Dorsolateral prefrontal cortex (tissue), 120 donors: ENCODE measurements at regions of chr5 and their contacts with region 1.

Region 1: GRCh38 chr5:138874771-138875551 is at the start of gene LRRTM2:
- DNase-seq: peak in 9 of 10 donors; percentile 50 to 86 (median 74)
- H3K4me3 ChIP-seq: peak within 1 kb of the TSS; percentile 41 to 88 (median 66)
- H3K27ac ChIP-seq: peak within 1 kb of the TSS; percentile 27 to 95 (median 89)
- H3K27me3 ChIP-seq: no peaks in the 10 kb centered on the region
- CTCF ChIP-seq: peak in 1 of 56 donors; percentile 8
- total RNA-seq, gene LRRTM2: 19.2 to 91.2 (median 65.0) TPM

Region 2: GRCh38 chr5:138725138-138725833 is 149.7 kb before region 1 on chr5:
- intact Hi-C with region 1: no loop called
- DNase-seq: peak in 8 of 10 donors; percentile 31 to 77 (median 58)
- H3K4me3 ChIP-seq: peak overlapping the region in 3 of 59 donors; percentile 12 to 16 (median 14)
- H3K27ac ChIP-seq: peak overlapping the region; percentile 4 to 94 (median 81)
- H3K27me3 ChIP-seq: no peaks in the 10 kb centered on the region
- CTCF ChIP-seq: peak in 20 of 56 donors; percentile 3 to 32 (median 18)

Region 3: GRCh38 chr5:138809391-138809790 is 65.6 kb before region 1 on chr5:
- intact Hi-C with region 1: no loop called
- DNase-seq: no peak
- H3K4me3 ChIP-seq: no peak overlapping the region
- H3K27ac ChIP-seq: no peak overlapping the region
- H3K27me3 ChIP-seq: no peaks in the 10 kb centered on the region
- CTCF ChIP-seq: no peak

Region 4: DNA sequence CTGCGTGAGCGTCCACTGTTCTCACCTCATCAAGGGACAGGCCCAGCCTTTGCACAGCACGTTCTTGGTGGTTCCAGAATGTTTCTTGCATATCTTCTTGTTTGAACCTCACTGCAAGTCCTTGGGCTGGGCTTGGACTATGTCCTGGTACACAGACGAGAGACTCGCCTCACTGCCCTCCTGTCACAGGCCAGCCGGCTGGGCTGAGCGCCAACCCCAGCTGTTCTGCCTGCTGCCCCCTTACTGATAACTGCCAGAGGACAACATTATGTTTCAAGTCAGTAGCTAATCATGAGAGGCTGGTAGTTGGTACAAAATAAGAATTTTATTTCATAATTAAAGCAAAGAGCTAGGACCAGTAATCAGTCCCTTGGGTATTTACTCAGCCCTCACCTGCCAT is 53.0 kb after region 1 on chr5:
- intact Hi-C with region 1: loop called (anchors 5 kb)
- DNase-seq: peak; percentile 77 to 94 (median 88)
- H3K4me3 ChIP-seq: peak overlapping the region in 6 of 59 donors; percentile 6 to 21 (median 12)
- H3K27ac ChIP-seq: peak overlapping the region; percentile 58 to 98 (median 89)
- H3K27me3 ChIP-seq: no peaks in the 10 kb centered on the region
- CTCF ChIP-seq: peak in 20 of 56 donors; percentile 7 to 43 (median 22)

Region 5: DNA sequence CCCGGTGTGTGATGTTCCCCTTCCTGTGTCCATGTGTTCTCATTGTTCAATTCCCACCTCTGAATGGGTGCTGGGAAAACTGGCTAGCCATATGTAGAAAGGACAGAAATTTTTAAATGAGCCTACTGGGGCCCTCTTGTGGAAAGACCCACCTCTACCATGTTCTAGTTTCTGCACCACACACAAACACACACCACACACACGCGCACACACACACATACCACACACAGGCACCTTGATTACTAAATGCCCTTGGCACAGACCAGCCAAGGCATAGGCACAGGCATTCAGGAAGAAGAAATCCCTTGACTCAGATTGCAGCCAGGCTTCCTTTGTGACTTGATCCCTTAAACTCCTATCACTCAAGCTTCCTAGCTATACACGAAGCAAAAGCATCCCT is 262.7 kb after region 1 on chr5:
- intact Hi-C with region 1: loop called (anchors 5 to 10 kb)
- DNase-seq: peak in 1 of 10 donors; percentile 40
- H3K4me3 ChIP-seq: no peak overlapping the region
- H3K27ac ChIP-seq: peak overlapping the region in 34 of 59 donors; percentile 11 to 90 (median 66)
- H3K27me3 ChIP-seq: no peaks in the 10 kb centered on the region
- CTCF ChIP-seq: peak in 47 of 56 donors; percentile 13 to 58 (median 39)